Activated CD4-positive, alpha-beta T cell treated with anti-CD3 and anti-CD28 coated beads for 36 hours (primary cell): ENCODE measurements at regions of chrX and their contacts with region 1.

Region 1: DNA sequence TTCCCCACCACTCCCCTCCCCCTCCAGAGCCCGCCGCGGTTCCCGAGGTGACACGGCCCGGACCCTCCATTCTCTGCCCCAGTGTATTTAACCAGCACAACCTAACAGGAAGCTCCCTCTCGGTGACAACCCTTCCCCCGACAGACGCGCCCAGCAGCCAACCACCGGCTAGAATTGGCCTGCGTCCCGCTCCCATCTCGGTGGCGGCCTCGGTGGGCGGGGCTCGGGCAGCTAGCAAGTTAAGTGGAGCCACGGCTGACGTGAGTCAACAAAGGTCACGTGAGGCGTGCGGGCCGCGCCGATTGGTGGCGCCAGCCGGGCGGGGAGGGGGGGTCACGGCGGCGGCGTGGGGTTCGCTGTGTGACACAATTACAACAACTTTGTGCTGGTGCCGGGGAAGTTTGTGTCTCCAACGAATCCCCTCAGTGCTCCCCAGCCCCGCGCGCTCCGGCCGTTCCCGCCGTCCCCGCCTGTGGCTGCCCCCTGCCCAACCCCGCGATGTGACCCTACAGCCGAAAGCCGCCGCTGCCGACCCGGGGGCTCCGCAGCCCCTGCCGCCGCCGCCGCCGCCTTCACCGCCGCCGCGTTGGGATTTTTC is at the start of gene KDM6A:
- DNase-seq: peak; percentile 97
- ATAC-seq: peak; percentile 91
- H3K4me3 Mint-ChIP-seq: peak within 1 kb of the TSS; percentile 92
- H3K27ac Mint-ChIP-seq: peak within 1 kb of the TSS; percentile 99
- H3K4me1 Mint-ChIP-seq: peaks cover 9% of the 10 kb centered on the region
- H3K27me3 Mint-ChIP-seq: no peaks in the 10 kb centered on the region
- total RNA-seq, gene KDM6A: 18.9 to 24.2 TPM

Region 2: DNA sequence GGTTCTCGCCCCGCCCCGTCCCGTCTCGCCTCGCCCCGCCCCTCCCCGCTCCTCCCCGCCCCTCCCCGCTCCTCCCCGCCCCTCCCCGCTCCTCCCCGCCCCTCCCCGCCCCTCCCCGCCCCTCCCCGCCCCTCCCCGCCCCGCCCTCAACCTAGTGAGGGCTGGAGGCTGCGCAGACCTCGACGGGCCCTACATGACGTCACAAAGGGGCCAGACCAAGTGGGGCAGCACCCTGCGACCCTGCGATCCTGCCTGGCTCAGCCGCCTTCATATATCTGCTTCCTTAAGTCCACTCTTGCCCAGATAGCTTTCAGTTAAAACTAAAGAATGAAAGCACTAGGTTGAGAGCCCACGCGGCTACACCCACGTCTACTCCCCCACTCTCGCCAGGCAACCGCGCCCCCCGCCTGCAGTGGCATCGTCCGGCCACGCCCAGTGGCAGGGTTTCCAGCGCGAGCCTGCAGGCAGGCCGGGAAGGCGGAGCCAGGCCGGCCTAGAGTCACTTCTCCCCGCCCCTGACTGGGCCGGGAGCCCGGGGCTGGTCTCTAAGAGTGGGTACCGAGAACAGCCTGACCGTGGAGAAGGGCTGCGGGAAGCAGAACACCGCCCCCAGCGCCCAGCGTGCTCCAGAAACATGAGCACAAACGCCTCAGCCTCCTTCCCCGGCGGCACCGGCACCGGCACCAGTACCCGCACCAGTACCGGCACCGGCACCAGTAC is 1218.3 kb before region 1 on chrX:
- CTCF ChIA-PET with region 1: no interaction called
- POLR2A ChIA-PET with region 1: no interaction called
- intact Hi-C with region 1: loop called in 1 of 2 experiments (anchors 5 kb)
- DNase-seq: peak; percentile 89
- ATAC-seq: peak; percentile 97
- H3K4me3 Mint-ChIP-seq: peak overlapping the region; percentile 80
- H3K27ac Mint-ChIP-seq: peak overlapping the region; percentile 98
- H3K4me1 Mint-ChIP-seq: peaks cover 5% of the 10 kb centered on the region
- H3K27me3 Mint-ChIP-seq: no peaks in the 10 kb centered on the region

Region 3: GRCh38 chrX:44332437-44332836 is 540.5 kb before region 1 on chrX:
- CTCF ChIA-PET with region 1: no interaction called
- POLR2A ChIA-PET with region 1: no interaction called
- intact Hi-C with region 1: no loop called
- DNase-seq: no peak
- ATAC-seq: no peak
- H3K4me3 Mint-ChIP-seq: no peak overlapping the region
- H3K27ac Mint-ChIP-seq: no peak overlapping the region
- H3K4me1 Mint-ChIP-seq: peaks cover 22% of the 10 kb centered on the region
- H3K27me3 Mint-ChIP-seq: no peaks in the 10 kb centered on the region

Region 4: DNA sequence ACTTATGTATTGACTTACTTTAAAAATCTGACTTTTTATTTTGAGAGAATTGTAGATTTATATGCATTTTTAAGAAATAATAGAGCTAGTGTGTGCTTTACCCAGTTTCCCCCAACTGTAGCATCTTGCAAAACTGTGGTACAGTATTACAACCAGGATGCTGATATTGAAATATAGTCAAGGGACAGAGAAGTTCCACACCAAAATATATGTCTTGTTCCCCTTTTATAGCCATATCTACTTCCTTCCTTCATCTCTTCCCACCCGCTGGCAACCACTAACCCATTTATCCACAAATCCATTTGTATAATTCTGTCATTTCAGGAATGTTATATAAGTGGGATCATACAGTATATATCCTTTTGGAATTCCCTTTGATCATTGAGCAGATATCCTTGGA is 16.9 kb after region 1 on chrX:
- CTCF ChIA-PET with region 1: interaction called, 3 read pairs
- POLR2A ChIA-PET with region 1: interaction called, 10 read pairs
- intact Hi-C with region 1: no loop called
- DNase-seq: no peak
- ATAC-seq: no peak
- H3K4me3 Mint-ChIP-seq: no peak overlapping the region
- H3K27ac Mint-ChIP-seq: peak overlapping the region; percentile 5
- H3K4me1 Mint-ChIP-seq: peaks cover 28% of the 10 kb centered on the region
- H3K27me3 Mint-ChIP-seq: no peaks in the 10 kb centered on the region

Region 5: DNA sequence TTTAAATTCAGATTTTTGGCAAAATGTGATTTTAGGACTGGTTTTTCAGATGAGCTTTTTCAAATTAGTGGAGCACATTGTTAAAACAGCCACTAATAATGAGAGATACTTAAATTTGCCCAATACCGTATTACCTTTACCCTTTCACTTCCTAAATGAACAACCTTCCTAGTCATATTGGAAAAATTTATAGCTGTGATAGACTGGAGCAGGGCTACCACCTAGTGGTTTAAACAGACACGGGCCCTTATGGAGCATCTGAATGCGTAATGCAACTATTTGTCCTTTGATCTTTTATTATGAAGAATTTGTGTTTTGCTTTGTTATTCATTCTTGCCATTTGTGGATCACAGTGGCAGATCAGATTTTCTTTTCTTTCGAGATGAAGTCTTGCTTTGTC is 72.8 kb after region 1 on chrX:
- CTCF ChIA-PET with region 1: no interaction called
- POLR2A ChIA-PET with region 1: interaction called, 5 read pairs
- intact Hi-C with region 1: loop called (anchors 5 kb)
- DNase-seq: peak; percentile 37
- ATAC-seq: no peak
- H3K4me3 Mint-ChIP-seq: no peak overlapping the region
- H3K27ac Mint-ChIP-seq: no peak overlapping the region
- H3K4me1 Mint-ChIP-seq: peaks cover 25% of the 10 kb centered on the region
- H3K27me3 Mint-ChIP-seq: no peaks in the 10 kb centered on the region

Region 6: GRCh38 chrX:45035084-45035483 is 162.2 kb after region 1 on chrX:
- CTCF ChIA-PET with region 1: no interaction called
- POLR2A ChIA-PET with region 1: no interaction called
- intact Hi-C with region 1: no loop called
- DNase-seq: no peak
- ATAC-seq: no peak
- H3K4me3 Mint-ChIP-seq: no peak overlapping the region
- H3K27ac Mint-ChIP-seq: no peak overlapping the region
- H3K4me1 Mint-ChIP-seq: peaks cover 3% of the 10 kb centered on the region
- H3K27me3 Mint-ChIP-seq: no peaks in the 10 kb centered on the region

Region 7: GRCh38 chrX:45070116-45071007 is 197.4 kb after region 1 on chrX:
- CTCF ChIA-PET with region 1: no interaction called
- POLR2A ChIA-PET with region 1: no interaction called
- intact Hi-C with region 1: loop called (anchors 2 to 5 kb)
- DNase-seq: peak; percentile 14
- ATAC-seq: peak; percentile 69
- H3K4me3 Mint-ChIP-seq: no peak overlapping the region
- H3K27ac Mint-ChIP-seq: peak overlapping the region; percentile 78
- H3K4me1 Mint-ChIP-seq: peaks cover 48% of the 10 kb centered on the region
- H3K27me3 Mint-ChIP-seq: no peaks in the 10 kb centered on the region

Region 8: GRCh38 chrX:45186643-45187026 is 313.7 kb after region 1 on chrX:
- CTCF ChIA-PET with region 1: no interaction called
- POLR2A ChIA-PET with region 1: no interaction called
- intact Hi-C with region 1: loop called in 1 of 2 experiments (anchors 5 kb)
- DNase-seq: no peak
- ATAC-seq: no peak
- H3K4me3 Mint-ChIP-seq: peak overlapping the region; percentile 70
- H3K27ac Mint-ChIP-seq: peak overlapping the region; percentile 72
- H3K4me1 Mint-ChIP-seq: peaks cover 31% of the 10 kb centered on the region
- H3K27me3 Mint-ChIP-seq: no peaks in the 10 kb centered on the region

Region 9: GRCh38 chrX:46325312-46325877 is 1452.5 kb after region 1 on chrX:
- CTCF ChIA-PET with region 1: no interaction called
- POLR2A ChIA-PET with region 1: no interaction called
- intact Hi-C with region 1: loop called in 1 of 2 experiments (anchors 5 kb)
- DNase-seq: peak; percentile 78
- ATAC-seq: peak; percentile 83
- H3K4me3 Mint-ChIP-seq: peak overlapping the region; percentile 3
- H3K27ac Mint-ChIP-seq: peak overlapping the region; percentile 76
- H3K4me1 Mint-ChIP-seq: peaks cover 62% of the 10 kb centered on the region
- H3K27me3 Mint-ChIP-seq: no peaks in the 10 kb centered on the region